Right cardiac atrium (tissue), 5 donors: ENCODE measurements at regions of chr5 and their contacts with region 1.

Region 1: DNA sequence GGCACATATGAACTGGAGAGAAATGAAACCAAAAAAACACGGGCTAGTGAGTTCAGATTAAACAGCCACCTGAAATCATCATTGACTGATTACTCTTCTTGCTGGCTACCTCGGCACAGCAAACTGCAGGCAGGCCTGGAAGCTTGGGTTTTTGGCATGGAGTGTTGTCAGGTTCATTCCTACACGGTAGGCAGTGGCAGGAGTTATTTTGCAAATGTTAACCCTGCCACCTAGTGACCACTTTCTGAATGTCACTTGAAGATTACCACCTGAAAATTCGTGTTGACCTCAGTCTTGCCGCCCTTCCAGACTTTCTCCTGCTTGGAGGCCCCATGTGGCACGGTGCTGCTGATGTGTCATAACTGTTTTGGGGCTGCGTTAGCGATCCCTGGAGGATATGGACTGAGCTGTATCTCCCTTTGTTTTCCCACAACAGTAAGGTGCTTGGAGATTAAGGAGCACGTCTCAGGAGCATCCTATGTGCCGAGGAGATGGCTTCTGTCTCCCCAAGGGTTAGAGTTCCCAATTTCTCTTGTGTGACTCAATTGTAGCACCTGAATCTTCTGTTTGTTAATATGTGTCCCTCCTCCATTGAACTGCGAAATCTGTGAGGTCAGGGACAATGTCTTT is 12.7 kb upstream of the CD180 start:
- DNase-seq: peak in 2 of 3 donors; percentile 67 to 69
- ATAC-seq: peak; percentile 87 to 88
- H3K4me3 ChIP-seq: no peak overlapping the region
- H3K27ac ChIP-seq: no peak overlapping the region
- H3K4me1 ChIP-seq: no peaks in the 10 kb centered on the region
- H3K27me3 ChIP-seq: no peaks in the 10 kb centered on the region

Region 2: GRCh38 chr5:66814146-66814991 is 394.9 kb before region 1 on chr5:
- intact Hi-C with region 1: loop called in 1 of 4 experiments (anchors 10 kb)
- DNase-seq: no peak
- ATAC-seq: peak in 1 of 2 donors; percentile 35
- H3K4me3 ChIP-seq: no peak overlapping the region
- H3K27ac ChIP-seq: no peak overlapping the region
- H3K4me1 ChIP-seq: peaks cover 2% of the 10 kb centered on the region
- H3K27me3 ChIP-seq: no peaks in the 10 kb centered on the region

Region 3: DNA sequence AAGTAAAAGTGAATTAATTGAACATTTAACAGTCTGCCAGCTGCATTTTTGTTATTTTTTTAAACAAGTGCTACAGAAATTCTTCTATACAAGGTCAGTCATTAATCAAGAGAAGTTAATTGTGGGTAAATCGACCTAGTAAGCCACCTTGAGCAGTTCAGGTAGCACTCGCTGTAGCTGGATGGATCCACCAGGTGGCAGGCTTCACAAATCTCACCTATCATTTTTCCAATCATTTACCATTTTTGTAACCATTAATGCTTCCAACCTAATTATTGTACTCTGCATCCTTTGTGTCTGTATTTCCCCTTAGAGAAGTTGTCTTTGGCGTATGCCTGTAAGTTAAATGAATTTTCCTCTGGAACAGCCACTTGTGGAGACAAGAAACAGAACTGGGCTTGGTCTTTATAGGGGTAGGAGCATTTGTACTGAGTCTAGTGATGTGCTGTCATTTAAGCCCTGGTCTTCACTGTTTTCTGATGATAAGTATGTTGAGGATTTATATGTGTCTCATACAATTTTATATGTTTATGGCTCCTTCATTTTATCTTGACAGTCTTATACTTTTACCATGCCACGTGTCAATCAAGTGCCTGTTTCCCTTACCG is 52.2 kb before region 1 on chr5:
- intact Hi-C with region 1: loop called in 2 of 4 experiments (anchors 2 to 10 kb)
- DNase-seq: peak in 1 of 3 donors; percentile 64
- ATAC-seq: no peak
- H3K4me3 ChIP-seq: no peak overlapping the region
- H3K27ac ChIP-seq: no peak overlapping the region
- H3K4me1 ChIP-seq: no peaks in the 10 kb centered on the region
- H3K27me3 ChIP-seq: no peaks in the 10 kb centered on the region

Region 4: DNA sequence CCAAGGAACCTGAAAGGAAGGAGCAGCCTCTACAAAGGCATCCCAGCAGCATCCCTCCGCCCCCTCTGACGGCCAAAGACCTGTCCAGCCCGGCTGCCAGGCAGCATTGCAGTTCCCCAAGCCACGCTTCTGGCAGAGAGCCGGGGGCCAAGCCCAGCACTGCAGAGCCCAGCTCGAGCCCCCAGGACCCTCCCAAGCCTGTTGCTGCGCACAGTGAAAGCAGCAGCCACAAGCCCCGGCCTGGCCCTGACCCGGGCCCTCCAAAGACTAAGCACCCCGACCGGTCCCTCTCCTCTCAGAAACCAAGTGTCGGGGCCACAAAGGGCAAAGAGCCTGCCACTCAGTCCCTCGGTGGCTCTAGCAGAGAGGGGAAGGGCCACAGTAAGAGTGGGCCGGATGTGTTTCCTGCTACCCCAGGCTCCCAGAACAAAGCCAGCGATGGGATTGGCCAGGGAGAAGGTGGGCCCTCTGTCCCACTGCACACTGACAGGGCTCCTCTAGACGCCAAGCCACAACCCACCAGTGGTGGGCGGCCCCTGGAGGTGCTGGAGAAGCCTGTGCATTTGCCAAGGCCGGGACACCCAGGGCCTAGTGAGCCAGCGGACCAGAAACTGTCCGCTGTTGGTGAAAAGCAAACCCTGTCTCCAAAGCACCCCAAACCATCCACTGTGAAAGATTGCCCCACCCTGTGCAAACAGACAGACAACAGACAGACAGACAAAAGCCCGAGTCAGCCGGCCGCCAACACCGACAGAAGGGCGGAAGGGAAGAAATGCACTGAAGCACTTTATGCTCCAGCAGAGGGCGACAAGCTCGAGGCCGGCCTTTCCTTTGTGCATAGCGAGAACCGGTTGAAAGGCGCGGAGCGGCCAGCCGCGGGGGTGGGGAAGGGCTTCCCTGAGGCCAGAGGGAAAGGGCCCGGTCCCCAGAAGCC is 43.5 kb before region 1 on chr5:
- intact Hi-C with region 1: loop called in 2 of 4 experiments (anchors 2 to 5 kb)
- DNase-seq: peak; percentile 92 to 96 (median 95)
- ATAC-seq: peak; percentile 87 to 90
- H3K4me3 ChIP-seq: no peak overlapping the region
- H3K27ac ChIP-seq: peak overlapping the region; percentile 68
- H3K4me1 ChIP-seq: no peaks in the 10 kb centered on the region
- H3K27me3 ChIP-seq: no peaks in the 10 kb centered on the region